Activated CD4-positive, alpha-beta memory T cell treated with anti-CD3 and anti-CD28 coated beads for 36 hours (primary cell): ENCODE measurements at regions of chr11 and their contacts with region 1.

Region 1: GRCh38 chr11:118051611-118052461 is 25.0 kb upstream of the TMPRSS4 start:
- DNase-seq: peak; percentile 82
- H3K4me3 Mint-ChIP-seq: peak overlapping the region; percentile 41
- H3K27ac Mint-ChIP-seq: peak overlapping the region; percentile 84
- H3K4me1 Mint-ChIP-seq: peaks cover 56% of the 10 kb centered on the region
- H3K27me3 Mint-ChIP-seq: no peaks in the 10 kb centered on the region

Region 2: DNA sequence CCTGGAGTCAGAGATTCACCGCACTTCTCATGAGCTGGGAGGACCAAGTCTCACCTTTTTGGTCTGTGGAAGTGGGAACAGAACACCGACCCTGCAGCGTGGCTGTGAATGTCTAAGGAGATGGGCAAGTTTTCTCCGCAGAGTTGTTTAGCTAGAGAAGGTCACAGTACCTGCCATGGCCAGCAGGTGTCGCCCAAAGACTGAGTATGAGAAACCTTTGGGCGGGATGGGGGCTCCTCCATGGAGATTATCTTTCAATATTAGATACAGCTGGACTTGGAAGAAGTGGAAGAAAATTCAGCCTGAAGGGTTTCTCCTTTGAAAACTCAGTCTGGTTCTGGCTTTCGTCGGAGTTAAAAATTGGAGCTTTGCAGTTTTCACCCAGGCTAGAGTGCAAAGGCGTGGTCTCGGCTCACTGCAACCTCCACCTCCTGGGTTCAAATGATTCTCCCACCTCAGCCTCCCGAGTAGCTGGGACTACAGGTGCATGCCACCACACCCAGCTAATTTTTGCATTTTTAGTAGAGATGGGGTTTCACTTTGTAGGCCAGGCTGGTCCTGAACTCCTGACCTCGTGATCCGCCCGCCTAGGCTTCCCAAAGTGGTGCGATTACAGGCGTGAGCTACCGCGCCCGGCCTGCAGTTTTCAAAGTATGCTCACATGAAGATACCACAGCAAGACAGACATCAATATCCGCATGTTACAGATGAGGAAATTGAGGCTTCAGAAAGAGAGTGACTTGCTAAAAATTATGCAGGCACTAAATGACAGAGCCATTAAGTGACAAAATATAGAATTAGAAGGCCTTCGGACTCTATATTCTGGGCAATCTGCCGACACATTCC is 244.1 kb before region 1 on chr11:
- CTCF ChIA-PET with region 1: interaction called, 148 read pairs
- POLR2A ChIA-PET with region 1: no interaction called
- intact Hi-C with region 1: loop called (anchors 1 kb)
- DNase-seq: peak; percentile 84
- H3K4me3 Mint-ChIP-seq: no peak overlapping the region
- H3K27ac Mint-ChIP-seq: no peak overlapping the region
- H3K4me1 Mint-ChIP-seq: peaks cover 17% of the 10 kb centered on the region
- H3K27me3 Mint-ChIP-seq: peaks cover 2% of the 10 kb centered on the region

Region 3: GRCh38 chr11:117828611-117829368 is 223.0 kb before region 1 on chr11:
- CTCF ChIA-PET with region 1: interaction called, 38 read pairs
- POLR2A ChIA-PET with region 1: no interaction called
- intact Hi-C with region 1: loop called (anchors 2 kb)
- DNase-seq: peak; percentile 91
- H3K4me3 Mint-ChIP-seq: no peak overlapping the region
- H3K27ac Mint-ChIP-seq: peak overlapping the region; percentile 28
- H3K4me1 Mint-ChIP-seq: peaks cover 45% of the 10 kb centered on the region
- H3K27me3 Mint-ChIP-seq: no peaks in the 10 kb centered on the region

Region 4: GRCh38 chr11:117907251-117907981 is 144.4 kb before region 1 on chr11:
- CTCF ChIA-PET with region 1: interaction called, 13 read pairs
- POLR2A ChIA-PET with region 1: no interaction called
- intact Hi-C with region 1: no loop called
- DNase-seq: peak; percentile 87
- H3K4me3 Mint-ChIP-seq: peak overlapping the region; percentile 45
- H3K27ac Mint-ChIP-seq: peak overlapping the region; percentile 8
- H3K4me1 Mint-ChIP-seq: peaks cover 13% of the 10 kb centered on the region
- H3K27me3 Mint-ChIP-seq: no peaks in the 10 kb centered on the region

Region 5: DNA sequence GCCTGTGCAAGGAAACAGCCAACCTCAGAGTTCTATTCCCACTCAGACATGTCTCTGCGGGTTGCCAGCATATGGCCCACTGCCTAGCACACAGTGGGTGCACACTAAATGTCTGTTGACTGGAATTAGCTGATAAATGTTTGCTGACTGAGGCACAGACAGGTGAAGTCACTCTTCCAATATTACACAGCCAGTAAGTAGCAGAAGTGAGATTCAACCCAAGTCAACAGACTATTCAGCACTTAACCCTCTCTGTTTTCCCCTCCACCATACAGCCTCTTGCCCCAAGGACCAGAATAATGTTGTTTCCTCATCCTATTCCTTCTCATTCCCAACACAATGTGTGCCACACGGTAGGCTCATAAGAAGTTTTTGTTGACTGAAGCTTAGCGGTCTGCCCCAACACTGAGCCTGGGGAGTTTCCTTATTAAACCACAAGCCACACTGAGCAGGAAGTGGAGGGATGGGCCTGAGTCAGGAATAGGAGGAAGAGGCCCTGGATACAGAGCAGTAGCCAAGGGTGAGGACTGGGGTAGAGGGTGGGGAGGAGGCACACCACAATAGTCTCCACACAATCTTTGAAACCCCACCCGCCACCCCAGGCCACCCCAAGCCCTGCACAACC is 81.3 kb before region 1 on chr11:
- CTCF ChIA-PET with region 1: interaction called, 12 read pairs
- POLR2A ChIA-PET with region 1: no interaction called
- intact Hi-C with region 1: no loop called
- DNase-seq: peak; percentile 71
- H3K4me3 Mint-ChIP-seq: peak overlapping the region; percentile 46
- H3K27ac Mint-ChIP-seq: peak overlapping the region; percentile 89
- H3K4me1 Mint-ChIP-seq: peaks cover 66% of the 10 kb centered on the region
- H3K27me3 Mint-ChIP-seq: no peaks in the 10 kb centered on the region

Region 6: DNA sequence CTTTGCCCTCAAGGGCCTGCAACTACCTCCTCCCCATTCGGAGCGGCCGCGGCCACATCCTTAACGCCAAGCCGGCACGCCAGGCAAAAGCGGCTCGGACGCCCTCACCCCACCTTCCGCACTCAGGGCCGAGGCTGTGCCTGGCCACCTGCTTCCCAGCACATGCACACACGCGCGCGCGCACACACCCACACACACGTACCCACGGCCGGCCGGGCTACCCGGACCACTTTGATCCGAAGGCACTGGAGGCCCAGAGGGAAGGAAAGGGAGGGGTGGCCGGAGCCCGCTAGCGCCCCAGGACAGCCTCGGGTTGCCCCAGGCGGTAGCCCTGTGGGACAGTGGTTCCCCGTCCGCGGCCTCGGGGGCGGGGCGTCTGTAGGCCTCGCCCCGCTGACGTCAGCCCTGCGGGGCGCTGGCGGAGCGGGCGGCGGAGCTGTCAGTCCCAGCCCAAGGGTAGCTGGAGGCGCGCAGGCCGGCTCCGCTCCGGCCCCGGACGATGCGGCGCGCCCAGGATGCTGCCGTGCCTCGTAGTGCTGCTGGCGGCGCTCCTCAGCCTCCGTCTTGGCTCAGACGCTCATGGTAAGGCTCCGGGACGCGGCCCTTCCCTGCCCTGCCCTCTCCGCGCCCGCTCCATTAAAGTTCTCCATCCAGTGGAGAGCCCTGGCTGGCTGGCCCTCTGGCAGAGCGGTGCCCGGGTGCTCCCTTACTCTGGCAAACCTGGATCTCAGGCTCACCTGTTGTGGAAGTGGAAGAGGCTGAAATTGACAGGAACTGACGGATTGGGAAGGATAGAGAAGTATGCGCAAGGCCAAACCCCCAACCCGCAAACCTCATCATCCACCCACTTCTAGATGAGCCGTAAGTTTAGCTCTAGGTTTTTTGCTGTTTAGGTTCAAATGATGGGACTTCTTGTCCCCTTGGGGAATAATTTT is 65.6 kb before region 1 on chr11 and contains the start of gene IL10RA:
- CTCF ChIA-PET with region 1: interaction called, 82 read pairs
- POLR2A ChIA-PET with region 1: interaction called, 38 read pairs
- intact Hi-C with region 1: loop called (anchors 1 kb)
- DNase-seq: peak; percentile 91
- H3K4me3 Mint-ChIP-seq: peak within 1 kb of the TSS; percentile 82
- H3K27ac Mint-ChIP-seq: peak within 1 kb of the TSS; percentile 97
- H3K4me1 Mint-ChIP-seq: peaks cover 69% of the 10 kb centered on the region
- H3K27me3 Mint-ChIP-seq: no peaks in the 10 kb centered on the region
- total RNA-seq, gene IL10RA: 114 to 117 TPM

Region 7: DNA sequence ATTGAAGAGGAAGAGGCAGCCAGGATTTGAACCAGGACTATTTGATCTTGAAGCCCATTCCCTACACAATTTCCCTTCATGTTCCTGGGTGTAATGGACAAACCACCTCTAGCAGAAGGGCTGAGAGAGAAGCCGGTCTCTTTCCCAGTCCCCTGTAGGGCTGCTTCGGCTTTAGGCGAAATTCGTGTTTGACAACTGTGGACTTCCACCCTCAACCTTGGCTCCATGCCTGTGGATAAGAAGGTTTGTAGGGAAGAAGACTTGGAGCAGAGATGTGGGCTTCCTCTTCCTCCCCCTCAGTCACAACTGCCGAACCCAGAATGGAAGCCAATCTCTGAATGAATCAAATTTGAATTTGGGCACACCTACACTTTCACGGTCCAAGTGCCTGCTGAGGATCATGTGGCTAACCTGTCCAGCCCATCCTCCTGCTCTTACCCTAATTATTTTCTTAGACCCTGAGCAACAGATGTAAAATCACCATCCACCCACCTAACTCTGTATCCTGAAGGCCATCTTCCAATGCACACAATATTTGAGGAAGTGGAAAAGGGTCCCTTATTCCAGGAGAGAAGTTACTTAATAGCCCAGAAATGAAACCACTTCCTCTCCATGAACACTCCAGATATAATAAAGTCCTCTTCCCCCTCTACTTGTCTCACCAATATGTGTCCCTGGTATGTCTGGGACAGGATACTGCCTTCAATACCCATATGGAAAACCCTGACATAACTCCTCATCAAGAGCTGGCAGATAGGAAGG is 134.7 kb after region 1 on chr11:
- CTCF ChIA-PET with region 1: no interaction called
- POLR2A ChIA-PET with region 1: no interaction called
- intact Hi-C with region 1: no loop called
- DNase-seq: no peak
- H3K4me3 Mint-ChIP-seq: no peak overlapping the region
- H3K27ac Mint-ChIP-seq: no peak overlapping the region
- H3K4me1 Mint-ChIP-seq: no peaks in the 10 kb centered on the region
- H3K27me3 Mint-ChIP-seq: peaks cover 10% of the 10 kb centered on the region